CD4-positive, alpha-beta T cell (primary cell): ENCODE measurements at regions of chr7 and their contacts with region 1.

Region 1: GRCh38 chr7:100803398-100804233 is 23.7 kb downstream of the EPHB4 start:
- DNase-seq: peak in 5 of 14 experiments; percentile 15 to 65 (median 57)
- ATAC-seq: no peak
- H3K4me3 ChIP-seq: no peak overlapping the region
- H3K4me3 Mint-ChIP-seq: no peak overlapping the region
- H3K27ac ChIP-seq: no peak overlapping the region
- H3K27ac Mint-ChIP-seq: no peak overlapping the region
- H3K4me1 ChIP-seq: peaks cover 4% of the 10 kb centered on the region
- H3K4me1 Mint-ChIP-seq: no peaks in the 10 kb centered on the region
- H3K27me3 ChIP-seq: peaks cover 0 to 8% of the 10 kb centered on the region in 2 experiments
- H3K27me3 Mint-ChIP-seq: no peaks in the 10 kb centered on the region
- CTCF ChIP-seq: no peak

Region 2: GRCh38 chr7:100789055-100789454 is 14.6 kb before region 1 on chr7:
- CTCF ChIA-PET with region 1: no interaction called
- POLR2A ChIA-PET with region 1: no interaction called
- intact Hi-C with region 1: no loop called
- DNase-seq: no peak
- ATAC-seq: no peak
- H3K4me3 ChIP-seq: no peak overlapping the region
- H3K4me3 Mint-ChIP-seq: no peak overlapping the region
- H3K27ac ChIP-seq: no peak overlapping the region
- H3K27ac Mint-ChIP-seq: no peak overlapping the region
- H3K4me1 ChIP-seq: no peaks in the 10 kb centered on the region
- H3K4me1 Mint-ChIP-seq: peaks cover 4% of the 10 kb centered on the region
- H3K27me3 ChIP-seq: peaks cover 5 to 7% of the 10 kb centered on the region in 2 experiments
- H3K27me3 Mint-ChIP-seq: peaks cover 22% of the 10 kb centered on the region
- CTCF ChIP-seq: no peak

Region 3: DNA sequence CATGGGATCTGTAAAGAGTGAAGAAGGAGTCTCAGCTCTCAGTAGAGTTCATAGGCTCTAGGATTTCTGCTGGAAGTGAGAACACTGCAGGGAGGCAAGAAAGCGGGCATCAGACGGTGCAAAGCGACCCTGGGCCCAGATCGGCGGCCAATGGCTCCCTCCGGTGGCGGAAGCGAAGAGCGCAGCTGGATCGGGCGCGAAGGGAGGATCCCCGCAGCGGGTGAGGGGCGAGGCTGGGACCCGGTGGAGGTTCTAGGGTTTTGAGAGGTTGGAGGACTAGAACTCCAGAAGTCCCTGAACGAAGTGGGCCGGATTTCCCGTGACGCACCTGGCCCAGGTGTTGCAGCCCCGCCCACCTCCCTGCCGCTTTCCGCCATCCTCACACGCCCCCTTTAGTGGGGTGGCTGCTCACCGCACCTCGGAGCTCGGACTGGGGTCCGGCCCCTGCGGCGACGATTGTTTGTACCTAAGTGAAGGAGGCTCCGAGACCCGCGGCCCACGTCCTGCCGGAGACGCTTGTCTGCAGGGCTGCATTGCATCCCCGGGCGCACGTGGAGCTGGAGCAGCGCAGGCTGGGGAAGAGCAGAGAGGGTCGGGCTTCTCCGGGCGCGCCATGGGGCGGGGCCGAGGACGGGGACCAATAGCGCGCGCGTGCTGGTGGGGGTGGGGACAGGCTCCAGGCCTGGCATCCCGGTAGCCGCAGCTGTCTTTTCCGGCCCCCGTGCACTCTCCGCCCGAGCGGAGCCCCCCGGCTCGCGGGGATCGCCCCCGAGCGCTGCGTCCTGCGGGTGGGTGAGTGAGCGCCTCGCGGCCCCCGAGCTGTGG is 48.6 kb after region 1 on chr7 and contains the start of gene SLC12A9:
- CTCF ChIA-PET with region 1: interaction called, 21 read pairs
- POLR2A ChIA-PET with region 1: interaction called, 3 read pairs
- intact Hi-C with region 1: loop called (anchors 1 kb)
- DNase-seq: peak; percentile 68 to 92 (median 82)
- ATAC-seq: peak; percentile 91
- H3K4me3 ChIP-seq: peak within 1 kb of the TSS; percentile 72
- H3K4me3 Mint-ChIP-seq: peak within 1 kb of the TSS; percentile 95
- H3K27ac ChIP-seq: peak within 1 kb of the TSS; percentile 36 to 62
- H3K27ac Mint-ChIP-seq: peak within 1 kb of the TSS; percentile 91
- H3K4me1 ChIP-seq: peaks cover 30% of the 10 kb centered on the region
- H3K4me1 Mint-ChIP-seq: peaks cover 23% of the 10 kb centered on the region
- H3K27me3 ChIP-seq: no peaks in the 10 kb centered on the region
- H3K27me3 Mint-ChIP-seq: no peaks in the 10 kb centered on the region
- CTCF ChIP-seq: peak; percentile 96
- total RNA-seq, gene SLC12A9: 26.3 to 28.2 TPM

Region 4: GRCh38 chr7:101077303-101078089 is 273.9 kb after region 1 on chr7:
- CTCF ChIA-PET with region 1: no interaction called
- POLR2A ChIA-PET with region 1: no interaction called
- intact Hi-C with region 1: loop called in 1 of 2 experiments (anchors 5 kb)
- DNase-seq: peak; percentile 70 to 89 (median 80)
- ATAC-seq: peak; percentile 99
- H3K4me3 ChIP-seq: no peak overlapping the region
- H3K4me3 Mint-ChIP-seq: no peak overlapping the region
- H3K27ac ChIP-seq: no peak overlapping the region
- H3K27ac Mint-ChIP-seq: no peak overlapping the region
- H3K4me1 ChIP-seq: peaks cover 5% of the 10 kb centered on the region
- H3K4me1 Mint-ChIP-seq: peaks cover 7% of the 10 kb centered on the region
- H3K27me3 ChIP-seq: no peaks in the 10 kb centered on the region
- H3K27me3 Mint-ChIP-seq: peaks cover 11% of the 10 kb centered on the region
- CTCF ChIP-seq: peak; percentile 87

Region 5: GRCh38 chr7:101486433-101487104 is 683.0 kb after region 1 on chr7:
- CTCF ChIA-PET with region 1: no interaction called
- POLR2A ChIA-PET with region 1: no interaction called
- intact Hi-C with region 1: loop called in 1 of 2 experiments (anchors 5 kb)
- DNase-seq: no peak
- ATAC-seq: no peak
- H3K4me3 ChIP-seq: no peak overlapping the region
- H3K4me3 Mint-ChIP-seq: no peak overlapping the region
- H3K27ac ChIP-seq: no peak overlapping the region
- H3K27ac Mint-ChIP-seq: no peak overlapping the region
- H3K4me1 ChIP-seq: no peaks in the 10 kb centered on the region
- H3K4me1 Mint-ChIP-seq: no peaks in the 10 kb centered on the region
- H3K27me3 ChIP-seq: no peaks in the 10 kb centered on the region
- H3K27me3 Mint-ChIP-seq: peaks cover 14% of the 10 kb centered on the region
- CTCF ChIP-seq: no peak